ENCODE measurements at regions of chr16 and their contacts with region 1.

Region 1: GRCh38 chr16:77782694-77783093 is 5.7 kb upstream of the VAT1L start:
- DNase-seq: peak; percentile 46
- ATAC-seq: no peak
- H3K4me3 ChIP-seq: no peak overlapping the region
- H3K27ac ChIP-seq: no peak overlapping the region
- H3K4me1 ChIP-seq: peaks cover 5% of the 10 kb centered on the region
- H3K27me3 ChIP-seq: no peaks in the 10 kb centered on the region
- CTCF ChIP-seq: peak; percentile 60
- POLR2A ChIP-seq: no peak
- RAD21 ChIP-seq: peak; percentile 49

Region 2: GRCh38 chr16:77853161-77853560 is 70.5 kb after region 1 on chr16:
- CTCF ChIA-PET with region 1: interaction called, 11 read pairs
- POLR2A ChIA-PET with region 1: no interaction called
- dilution Hi-C with region 1: no loop called
- in situ Hi-C with region 1: no loop called
- intact Hi-C with region 1: no loop called
- DNase-seq: no peak
- ATAC-seq: no peak
- H3K4me3 ChIP-seq: no peak overlapping the region
- H3K27ac ChIP-seq: no peak overlapping the region
- H3K4me1 ChIP-seq: peaks cover 2% of the 10 kb centered on the region; the same call in 1 of the 2 replicates
- H3K27me3 ChIP-seq: no peaks in the 10 kb centered on the region
- CTCF ChIP-seq: no peak
- POLR2A ChIP-seq: no peak
- RAD21 ChIP-seq: no peak